ENCODE measurements at regions of chr1 and their contacts with region 1.

Region 1: DNA sequence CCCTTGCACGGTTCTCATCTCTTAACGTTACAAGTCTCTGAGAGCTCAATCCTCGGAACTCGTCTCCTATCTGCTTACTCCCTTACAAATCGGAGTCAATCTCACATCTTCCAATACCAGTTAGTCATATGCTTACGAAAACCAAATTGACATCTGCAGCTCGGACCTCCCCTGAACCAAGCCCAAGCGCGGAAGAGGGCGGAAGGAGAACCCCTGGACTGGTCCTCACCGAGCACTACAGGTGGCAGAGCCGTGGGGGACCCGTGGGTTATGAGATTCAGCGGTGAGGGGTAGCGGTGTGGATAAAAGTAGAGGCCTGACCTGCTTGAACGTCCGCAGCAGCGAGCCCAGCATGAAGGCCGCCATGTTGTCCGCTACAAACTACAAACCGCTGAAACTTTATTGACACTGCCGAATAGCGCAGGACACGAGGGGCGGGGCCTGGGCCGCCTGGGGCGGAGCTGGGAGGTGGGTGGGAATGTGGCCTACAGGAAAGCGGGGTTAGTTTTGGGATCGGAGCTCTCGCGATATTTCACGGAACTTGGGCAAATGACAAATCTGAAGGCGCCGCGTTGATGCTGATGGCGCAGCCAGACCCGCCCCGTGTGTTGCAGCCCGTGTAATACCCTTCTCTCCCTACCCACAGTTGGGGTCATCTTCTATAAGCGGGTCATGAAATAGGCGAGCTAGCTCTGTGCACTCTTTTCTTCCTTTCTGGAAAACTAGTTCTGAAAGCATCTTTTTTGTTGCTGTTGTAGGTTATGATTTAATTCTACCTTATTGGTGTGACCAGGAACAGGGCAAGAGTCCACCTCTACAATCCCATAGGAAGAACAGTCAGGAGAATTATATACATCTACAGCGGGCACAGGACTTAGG is at the start of gene MRPS14:
- H3K4me3 Mint-ChIP-seq: peak within 1 kb of the TSS; percentile 79
- H3K27ac Mint-ChIP-seq: peak within 1 kb of the TSS; percentile 90
- H3K4me1 Mint-ChIP-seq: peaks cover 24% of the 10 kb centered on the region
- H3K27me3 Mint-ChIP-seq: no peaks in the 10 kb centered on the region

Region 2: DNA sequence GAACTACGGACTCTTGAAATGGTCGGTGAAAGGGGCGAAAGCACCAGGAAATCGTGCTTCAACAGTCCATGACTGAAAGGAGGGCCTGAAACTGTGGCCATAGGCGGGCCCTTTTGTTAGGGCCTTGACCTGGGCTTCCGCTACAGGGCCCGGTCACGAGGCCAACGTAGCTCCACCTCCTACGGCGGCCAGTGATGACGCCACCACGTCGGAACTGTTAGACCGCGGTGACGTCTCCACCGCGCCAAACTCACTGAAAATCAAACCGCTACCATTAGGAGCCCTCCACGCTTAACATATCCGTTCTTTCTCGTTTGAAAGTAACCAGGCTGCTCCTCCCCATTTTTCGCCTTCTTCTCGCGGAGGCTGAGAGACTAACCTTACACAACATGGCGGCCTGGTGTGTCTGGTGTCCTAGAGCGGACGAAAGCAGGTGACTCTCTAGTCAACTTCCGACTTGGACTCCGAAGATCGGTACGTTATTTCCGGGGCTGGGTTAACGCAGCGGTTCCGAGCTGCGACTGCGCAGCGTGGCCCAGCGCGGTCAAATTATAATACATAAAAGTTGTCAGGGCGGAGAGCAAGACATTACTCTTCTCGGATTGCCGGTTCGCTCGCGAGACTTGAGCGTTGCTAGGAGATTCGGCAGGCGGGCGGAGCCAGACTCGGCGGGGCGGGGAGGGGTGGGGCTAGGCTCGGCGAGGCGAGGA is 23.9 kb before region 1 on chr1:
- intact Hi-C with region 1: loop called (anchors 1 kb)
- H3K4me3 Mint-ChIP-seq: no peak overlapping the region
- H3K27ac Mint-ChIP-seq: no peak overlapping the region
- H3K4me1 Mint-ChIP-seq: peaks cover 37% of the 10 kb centered on the region
- H3K27me3 Mint-ChIP-seq: no peaks in the 10 kb centered on the region

Region 3: GRCh38 chr1:175146529-175147213 is 123.4 kb after region 1 on chr1:
- intact Hi-C with region 1: loop called (anchors 2 kb)
- H3K4me3 Mint-ChIP-seq: no peak overlapping the region
- H3K27ac Mint-ChIP-seq: no peak overlapping the region
- H3K4me1 Mint-ChIP-seq: no peaks in the 10 kb centered on the region
- H3K27me3 Mint-ChIP-seq: peaks cover 10% of the 10 kb centered on the region

Region 4: DNA sequence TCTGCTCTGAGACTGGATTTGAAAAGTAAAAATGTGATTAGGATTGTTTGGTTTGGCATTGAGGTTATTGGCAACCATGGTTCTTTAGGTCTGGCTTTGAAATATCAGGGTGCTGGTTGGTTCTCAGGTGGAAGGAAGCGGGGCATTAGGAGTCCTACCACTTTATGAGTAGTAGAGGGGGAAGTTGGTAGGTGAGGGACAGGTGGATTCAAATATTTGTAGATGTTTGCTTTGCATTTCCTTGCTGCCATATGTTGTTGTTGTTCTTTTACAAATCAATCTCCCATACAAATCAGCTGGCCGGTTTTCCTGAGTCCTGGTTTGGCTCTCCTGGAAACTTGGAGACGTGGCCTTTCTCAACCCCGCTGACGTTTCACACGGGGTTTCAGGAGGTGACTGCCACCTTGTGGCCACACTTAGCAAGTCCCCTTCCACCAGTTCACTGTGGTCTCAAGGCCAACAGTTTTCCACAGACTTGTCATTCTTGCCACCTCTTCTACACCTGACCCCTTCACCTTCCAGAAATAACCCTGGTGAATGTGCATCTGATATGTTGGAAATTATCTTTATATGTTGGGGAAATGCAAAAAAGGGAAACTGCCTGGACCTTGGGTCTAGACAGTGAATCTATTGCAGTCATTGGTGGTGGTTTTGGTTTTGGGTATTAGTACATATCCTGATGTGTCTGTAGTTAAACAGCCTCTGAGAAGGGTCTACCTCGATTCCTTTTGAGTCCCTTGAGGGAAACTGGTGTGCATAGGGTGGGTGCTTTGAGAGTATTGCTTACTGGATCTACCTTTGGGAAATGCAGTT is 296.3 kb after region 1 on chr1:
- intact Hi-C with region 1: loop called (anchors 5 kb)
- H3K4me3 Mint-ChIP-seq: no peak overlapping the region
- H3K27ac Mint-ChIP-seq: no peak overlapping the region
- H3K4me1 Mint-ChIP-seq: peaks cover 6% of the 10 kb centered on the region
- H3K27me3 Mint-ChIP-seq: peaks cover 3% of the 10 kb centered on the region

Region 5: DNA sequence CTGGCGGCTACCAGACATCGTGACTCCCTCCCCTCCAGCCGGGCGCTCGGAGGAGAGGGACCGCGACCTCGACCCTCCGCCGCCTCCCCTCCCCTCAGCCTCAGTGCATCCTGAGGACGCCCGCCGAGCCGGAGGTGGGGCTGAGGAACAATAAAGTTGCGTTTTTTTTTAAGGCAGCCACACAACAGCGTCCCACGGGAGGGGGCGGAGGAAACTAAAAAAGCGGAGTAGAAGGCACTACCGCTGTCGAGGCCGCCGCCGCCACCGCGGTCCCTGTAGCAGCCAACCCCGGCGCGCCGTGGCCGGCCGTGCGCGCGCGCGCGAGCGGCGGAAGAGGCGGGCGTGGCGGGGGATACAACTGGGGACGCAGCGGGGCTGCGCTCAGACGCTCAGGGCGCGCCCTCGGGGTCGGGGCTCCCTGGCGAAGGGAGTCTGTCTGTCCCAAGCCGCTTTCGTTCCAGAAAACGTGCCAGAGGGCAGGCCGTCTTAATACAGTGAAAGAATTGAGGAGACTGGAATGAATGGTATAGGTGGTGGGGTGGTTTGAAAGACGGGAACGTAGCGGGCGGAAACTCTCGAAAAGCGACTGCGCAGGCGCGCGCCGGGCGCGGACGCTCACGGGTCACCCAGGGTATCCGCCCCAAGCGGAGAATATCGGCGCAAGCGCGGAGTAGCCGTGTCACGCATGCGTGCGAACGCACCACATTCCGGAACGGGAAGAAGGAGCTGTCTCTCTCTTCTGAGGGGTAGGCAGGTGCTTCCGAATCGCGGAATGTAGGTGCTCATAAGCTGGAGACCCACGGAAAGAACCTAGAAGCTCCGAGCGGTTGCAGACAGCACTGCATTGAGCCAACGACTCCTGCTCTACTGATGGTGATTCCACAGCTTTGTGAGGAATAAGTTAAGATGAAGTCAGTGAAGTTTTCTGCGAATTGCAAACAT is 1184.0 kb after region 1 on chr1 and contains the start of gene COP1:
- intact Hi-C with region 1: loop called (anchors 10 kb)
- H3K4me3 Mint-ChIP-seq: peak within 1 kb of the TSS; percentile 98
- H3K27ac Mint-ChIP-seq: peak within 1 kb of the TSS; percentile 87
- H3K4me1 Mint-ChIP-seq: peaks cover 63% of the 10 kb centered on the region
- H3K27me3 Mint-ChIP-seq: no peaks in the 10 kb centered on the region